Activated B cell treated with CpG ODN at 0.5 μM for 24 hours (primary cell): ENCODE measurements at regions of chr1 and their contacts with region 1.

Region 1: GRCh38 chr1:230120926-230121381 is 53.9 kb downstream of the GALNT2 start:
- DNase-seq: no peak
- ATAC-seq: no peak
- H3K4me3 Mint-ChIP-seq: peak overlapping the region; percentile 12
- H3K27ac Mint-ChIP-seq: peak overlapping the region; percentile 90
- H3K4me1 Mint-ChIP-seq: peaks cover 94% of the 10 kb centered on the region
- H3K27me3 Mint-ChIP-seq: no peaks in the 10 kb centered on the region
- CTCF ChIP-seq: no peak

Region 2: GRCh38 chr1:228944935-228945371 is 1176.0 kb before region 1 on chr1:
- CTCF ChIA-PET with region 1: no interaction called
- POLR2A ChIA-PET with region 1: no interaction called
- intact Hi-C with region 1: no loop called
- DNase-seq: no peak
- ATAC-seq: no peak
- H3K4me3 Mint-ChIP-seq: no peak overlapping the region
- H3K27ac Mint-ChIP-seq: no peak overlapping the region
- H3K4me1 Mint-ChIP-seq: no peaks in the 10 kb centered on the region
- H3K27me3 Mint-ChIP-seq: peaks cover 3% of the 10 kb centered on the region
- CTCF ChIP-seq: no peak

Region 3: GRCh38 chr1:229479660-229480399 is 641.1 kb before region 1 on chr1:
- CTCF ChIA-PET with region 1: no interaction called
- POLR2A ChIA-PET with region 1: interaction called, 9 read pairs
- intact Hi-C with region 1: loop called (anchors 5 kb)
- DNase-seq: peak; percentile 25
- ATAC-seq: peak; percentile 85
- H3K4me3 Mint-ChIP-seq: peak overlapping the region; percentile 33
- H3K27ac Mint-ChIP-seq: peak overlapping the region; percentile 89
- H3K4me1 Mint-ChIP-seq: peaks cover 46% of the 10 kb centered on the region
- H3K27me3 Mint-ChIP-seq: no peaks in the 10 kb centered on the region
- CTCF ChIP-seq: no peak

Region 4: DNA sequence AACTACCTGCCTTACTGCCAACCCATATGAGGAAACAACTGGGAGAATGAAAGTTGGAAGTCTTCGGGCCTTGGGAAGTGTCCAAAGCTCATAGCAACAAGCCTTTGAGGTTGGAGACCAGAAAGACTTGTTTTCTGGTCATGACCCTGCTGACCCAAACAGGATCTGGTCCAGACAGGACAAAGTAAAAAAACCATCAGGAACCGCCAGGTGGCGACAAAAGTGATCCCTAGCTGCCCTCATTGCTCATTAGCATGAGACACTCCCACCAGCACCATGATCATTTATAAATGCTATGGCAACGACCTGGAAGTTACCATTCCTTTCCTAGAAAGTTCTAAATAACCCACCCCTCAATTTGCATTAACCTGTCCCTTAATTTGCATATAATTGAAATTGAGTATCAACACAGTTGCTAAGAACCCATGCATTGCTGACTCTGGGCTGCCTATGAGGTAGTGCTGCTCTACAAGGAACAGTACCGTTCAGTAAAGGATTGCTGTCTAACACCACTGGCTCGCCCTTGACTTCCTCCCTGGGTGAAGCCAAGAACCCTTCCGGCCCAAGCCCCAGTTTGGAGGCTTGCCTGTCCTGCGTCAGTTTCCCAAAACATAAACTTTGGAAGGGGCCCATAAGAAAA is 405.9 kb before region 1 on chr1:
- CTCF ChIA-PET with region 1: no interaction called
- POLR2A ChIA-PET with region 1: interaction called, 11 read pairs
- intact Hi-C with region 1: no loop called
- DNase-seq: peak; percentile 24
- ATAC-seq: peak; percentile 47
- H3K4me3 Mint-ChIP-seq: no peak overlapping the region
- H3K27ac Mint-ChIP-seq: no peak overlapping the region
- H3K4me1 Mint-ChIP-seq: peaks cover 2% of the 10 kb centered on the region
- H3K27me3 Mint-ChIP-seq: no peaks in the 10 kb centered on the region
- CTCF ChIP-seq: no peak

Region 5: DNA sequence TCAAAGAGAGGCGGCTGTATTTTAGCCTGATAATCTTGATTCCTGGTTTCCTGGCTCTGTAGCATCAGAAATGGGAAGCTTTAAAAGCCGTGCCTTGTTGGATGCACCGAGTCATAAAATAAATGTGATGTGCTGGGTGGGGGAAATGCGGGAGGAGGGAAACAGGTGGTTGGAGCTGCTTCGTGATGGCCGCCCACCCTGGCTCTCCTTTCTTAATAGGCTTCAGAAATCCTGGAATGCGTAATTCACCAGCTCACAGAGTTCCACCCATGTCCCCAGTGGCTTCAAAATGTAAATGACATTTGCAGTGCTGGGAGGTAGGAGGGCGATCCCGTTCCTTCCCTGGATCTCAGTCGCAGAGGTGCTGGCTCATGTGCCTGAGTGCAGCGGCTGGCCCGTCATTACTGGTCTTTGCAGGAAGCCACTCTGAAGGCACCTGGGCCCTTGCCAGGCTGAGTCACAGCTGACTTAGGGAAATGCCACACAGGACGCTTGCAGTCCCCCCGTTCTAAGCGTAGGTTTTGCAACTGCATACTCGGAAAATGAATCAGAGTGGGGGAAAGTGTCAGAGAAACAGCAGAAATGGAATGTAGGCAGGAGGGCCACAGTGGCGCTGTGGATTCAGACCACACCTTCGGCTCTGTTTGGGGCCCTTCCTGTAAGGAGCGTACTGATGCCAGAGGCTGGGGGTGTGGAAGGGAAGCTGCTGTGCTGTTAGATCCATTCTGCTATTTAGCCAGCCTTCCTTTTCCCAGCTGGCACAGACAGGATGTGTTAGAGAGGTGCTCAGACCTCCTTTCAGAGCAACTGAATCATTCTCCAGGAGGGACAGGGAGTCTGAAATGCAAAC is 16.3 kb before region 1 on chr1:
- CTCF ChIA-PET with region 1: interaction called, 17 read pairs
- POLR2A ChIA-PET with region 1: interaction called, 222 read pairs
- intact Hi-C with region 1: loop called (anchors 1 kb)
- DNase-seq: peak; percentile 50
- ATAC-seq: peak; percentile 90
- H3K4me3 Mint-ChIP-seq: peak overlapping the region; percentile 63
- H3K27ac Mint-ChIP-seq: peak overlapping the region; percentile 70
- H3K4me1 Mint-ChIP-seq: peaks cover 82% of the 10 kb centered on the region
- H3K27me3 Mint-ChIP-seq: no peaks in the 10 kb centered on the region
- CTCF ChIP-seq: no peak

Region 6: DNA sequence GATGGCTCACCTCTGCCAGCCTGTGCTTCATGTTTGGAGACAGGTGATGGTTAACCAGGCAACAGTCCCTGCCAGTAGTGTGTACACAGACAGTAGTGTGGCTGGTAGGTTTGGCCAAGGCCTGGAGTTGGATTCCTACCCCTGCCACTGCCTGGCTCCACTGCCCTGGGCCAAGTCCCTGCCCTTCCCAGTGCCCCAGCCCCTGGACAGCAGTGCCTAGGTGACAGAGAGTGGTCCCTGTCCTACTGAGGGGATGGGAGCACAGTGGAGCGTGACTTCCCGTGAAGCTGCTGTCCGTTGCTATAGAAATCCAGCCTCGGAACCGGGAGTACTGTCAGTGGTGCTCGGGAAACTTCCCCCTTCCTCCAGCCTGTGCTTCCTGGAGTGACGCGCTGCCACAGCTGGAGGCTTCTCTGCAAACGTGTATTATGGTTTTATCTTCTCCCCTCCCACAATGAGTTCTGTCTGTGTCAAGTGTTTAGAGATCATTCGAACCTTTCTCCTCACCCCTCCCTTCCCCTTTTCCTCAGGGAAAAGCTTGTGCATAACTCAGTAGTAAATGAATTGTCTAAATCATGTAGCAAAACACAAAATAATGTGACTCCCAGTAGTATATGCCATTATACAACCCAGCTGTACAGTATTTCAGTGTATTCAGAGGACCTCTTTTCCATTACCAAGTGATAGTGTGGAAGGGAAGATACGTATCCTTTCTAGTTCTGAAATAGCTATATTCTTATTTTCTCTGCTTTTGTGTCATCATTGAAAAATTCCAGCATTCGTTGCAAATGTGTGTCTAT is 19.5 kb after region 1 on chr1:
- CTCF ChIA-PET with region 1: interaction called, 3 read pairs
- POLR2A ChIA-PET with region 1: interaction called, 132 read pairs
- intact Hi-C with region 1: no loop called
- DNase-seq: no peak
- ATAC-seq: no peak
- H3K4me3 Mint-ChIP-seq: no peak overlapping the region
- H3K27ac Mint-ChIP-seq: no peak overlapping the region
- H3K4me1 Mint-ChIP-seq: peaks cover 40% of the 10 kb centered on the region
- H3K27me3 Mint-ChIP-seq: no peaks in the 10 kb centered on the region
- CTCF ChIP-seq: no peak

Region 7: DNA sequence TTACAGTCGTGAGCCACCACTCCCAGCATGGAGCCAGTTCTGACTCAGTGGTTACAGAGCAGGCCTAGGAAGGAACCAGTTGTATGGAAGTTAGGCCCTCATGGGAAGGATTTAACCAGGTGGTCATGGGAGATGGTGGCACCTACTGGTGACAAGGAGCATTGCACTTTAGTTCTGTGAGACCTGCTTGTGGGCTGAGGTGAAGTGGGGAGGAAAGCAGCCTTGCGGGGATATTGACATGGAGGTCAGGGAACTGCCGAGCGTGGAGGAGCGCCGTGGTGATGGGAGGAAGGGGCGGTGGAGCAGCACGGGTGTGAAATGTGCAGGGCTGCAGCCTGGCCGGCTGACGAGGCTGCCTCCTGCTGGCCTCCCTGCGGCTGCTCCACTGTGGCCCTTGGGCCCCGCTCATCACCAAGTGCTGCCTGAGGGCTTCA is 46.5 kb after region 1 on chr1:
- CTCF ChIA-PET with region 1: interaction called, 4 read pairs
- POLR2A ChIA-PET with region 1: interaction called, 19 read pairs
- intact Hi-C with region 1: loop called (anchors 1 kb)
- DNase-seq: no peak
- ATAC-seq: peak; percentile 32
- H3K4me3 Mint-ChIP-seq: no peak overlapping the region
- H3K27ac Mint-ChIP-seq: peak overlapping the region; percentile 75
- H3K4me1 Mint-ChIP-seq: peaks cover 79% of the 10 kb centered on the region
- H3K27me3 Mint-ChIP-seq: no peaks in the 10 kb centered on the region
- CTCF ChIP-seq: no peak

Region 8: GRCh38 chr1:230303822-230304221 is 182.9 kb after region 1 on chr1:
- CTCF ChIA-PET with region 1: no interaction called
- POLR2A ChIA-PET with region 1: interaction called, 4 read pairs
- intact Hi-C with region 1: loop called (anchors 5 kb)
- DNase-seq: no peak
- ATAC-seq: no peak
- H3K4me3 Mint-ChIP-seq: no peak overlapping the region
- H3K27ac Mint-ChIP-seq: no peak overlapping the region
- H3K4me1 Mint-ChIP-seq: peaks cover 65% of the 10 kb centered on the region
- H3K27me3 Mint-ChIP-seq: no peaks in the 10 kb centered on the region
- CTCF ChIP-seq: no peak

Region 9: GRCh38 chr1:231013391-231014018 is 892.6 kb after region 1 on chr1:
- CTCF ChIA-PET with region 1: no interaction called
- POLR2A ChIA-PET with region 1: no interaction called
- intact Hi-C with region 1: no loop called
- DNase-seq: no peak
- ATAC-seq: no peak
- H3K4me3 Mint-ChIP-seq: no peak overlapping the region
- H3K27ac Mint-ChIP-seq: no peak overlapping the region
- H3K4me1 Mint-ChIP-seq: no peaks in the 10 kb centered on the region
- H3K27me3 Mint-ChIP-seq: no peaks in the 10 kb centered on the region
- CTCF ChIP-seq: no peak